ENCODE measurements at regions of chr9 and their contacts with region 1.

Region 1: GRCh38 chr9:19999491-20000057 is 210.7 kb upstream of the SLC24A2 start:
- DNase-seq: peak; percentile 85
- H3K4me3 Mint-ChIP-seq: no peak overlapping the region
- H3K27ac Mint-ChIP-seq: peak overlapping the region; percentile 85
- H3K4me1 Mint-ChIP-seq: peaks cover 43% of the 10 kb centered on the region
- H3K27me3 Mint-ChIP-seq: no peaks in the 10 kb centered on the region

Region 2: DNA sequence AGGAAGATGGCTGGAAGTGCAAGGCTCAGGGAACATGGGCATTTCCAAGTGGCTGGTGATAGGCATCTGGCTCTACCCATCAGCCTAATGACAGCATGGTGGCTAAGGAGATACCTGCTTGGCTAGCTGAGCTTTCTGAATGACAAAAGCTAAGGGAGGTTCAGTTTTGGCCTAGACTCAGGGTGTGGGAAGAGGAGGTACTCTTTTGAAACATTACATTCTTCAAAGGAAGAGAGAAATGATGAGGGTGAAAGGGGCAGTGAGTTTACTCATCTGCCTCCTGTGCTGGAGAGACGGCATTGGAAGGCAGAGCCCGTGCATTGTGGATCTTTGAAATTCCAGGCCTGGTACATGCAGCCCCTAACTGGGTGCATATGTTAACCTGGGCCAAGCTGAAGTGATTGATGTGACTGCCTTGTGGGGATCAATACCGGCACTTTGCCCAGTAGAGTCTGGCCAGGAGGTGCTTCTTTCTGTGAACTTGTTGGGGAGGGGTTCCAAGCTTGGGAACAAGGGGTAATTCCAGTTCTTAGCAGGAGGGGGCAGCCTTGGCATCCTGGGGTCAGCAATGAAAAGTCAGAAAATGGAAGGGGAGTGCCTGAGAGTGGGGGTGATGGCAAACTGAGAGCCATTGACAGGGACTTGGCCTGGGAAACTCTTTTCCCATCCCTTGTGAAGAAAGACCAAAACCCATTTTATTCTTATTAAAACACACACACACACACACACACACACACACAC is 482.2 kb before region 1 on chr9:
- CTCF ChIA-PET with region 1: no interaction called
- intact Hi-C with region 1: loop called (anchors 1 kb)
- DNase-seq: peak; percentile 21
- H3K4me3 Mint-ChIP-seq: no peak overlapping the region
- H3K27ac Mint-ChIP-seq: peak overlapping the region; percentile 15
- H3K4me1 Mint-ChIP-seq: peaks cover 31% of the 10 kb centered on the region
- H3K27me3 Mint-ChIP-seq: peaks cover 11% of the 10 kb centered on the region

Region 3: DNA sequence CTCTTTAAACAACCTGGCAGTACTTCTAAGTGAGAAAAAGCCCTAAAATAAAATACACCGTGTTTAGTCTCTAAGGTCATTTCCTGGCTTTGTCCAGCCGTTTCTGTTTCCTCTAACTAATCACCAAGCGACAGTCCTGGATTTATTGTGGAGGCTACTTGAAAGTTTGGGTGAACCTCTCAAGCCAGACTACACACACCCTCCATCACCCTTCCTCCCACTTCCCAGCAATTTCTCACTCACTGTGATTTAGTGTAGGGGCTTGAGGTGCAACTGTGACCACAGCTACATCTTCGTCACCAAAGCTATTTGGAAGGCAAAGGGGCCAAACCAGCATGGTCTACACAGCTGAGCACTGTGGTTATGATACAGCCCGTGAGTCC is 29.3 kb after region 1 on chr9:
- CTCF ChIA-PET with region 1: no interaction called
- intact Hi-C with region 1: no loop called
- DNase-seq: no peak
- H3K4me3 Mint-ChIP-seq: no peak overlapping the region
- H3K27ac Mint-ChIP-seq: no peak overlapping the region
- H3K4me1 Mint-ChIP-seq: no peaks in the 10 kb centered on the region
- H3K27me3 Mint-ChIP-seq: no peaks in the 10 kb centered on the region

Region 4: GRCh38 chr9:20209391-20210340 is 210.1 kb after region 1 on chr9:
- CTCF ChIA-PET with region 1: interaction called, 3 read pairs
- intact Hi-C with region 1: loop called (anchors 1 kb)
- DNase-seq: peak; percentile 56
- H3K4me3 Mint-ChIP-seq: no peak overlapping the region
- H3K27ac Mint-ChIP-seq: peak overlapping the region; percentile 70
- H3K4me1 Mint-ChIP-seq: peaks cover 31% of the 10 kb centered on the region
- H3K27me3 Mint-ChIP-seq: no peaks in the 10 kb centered on the region

Region 5: DNA sequence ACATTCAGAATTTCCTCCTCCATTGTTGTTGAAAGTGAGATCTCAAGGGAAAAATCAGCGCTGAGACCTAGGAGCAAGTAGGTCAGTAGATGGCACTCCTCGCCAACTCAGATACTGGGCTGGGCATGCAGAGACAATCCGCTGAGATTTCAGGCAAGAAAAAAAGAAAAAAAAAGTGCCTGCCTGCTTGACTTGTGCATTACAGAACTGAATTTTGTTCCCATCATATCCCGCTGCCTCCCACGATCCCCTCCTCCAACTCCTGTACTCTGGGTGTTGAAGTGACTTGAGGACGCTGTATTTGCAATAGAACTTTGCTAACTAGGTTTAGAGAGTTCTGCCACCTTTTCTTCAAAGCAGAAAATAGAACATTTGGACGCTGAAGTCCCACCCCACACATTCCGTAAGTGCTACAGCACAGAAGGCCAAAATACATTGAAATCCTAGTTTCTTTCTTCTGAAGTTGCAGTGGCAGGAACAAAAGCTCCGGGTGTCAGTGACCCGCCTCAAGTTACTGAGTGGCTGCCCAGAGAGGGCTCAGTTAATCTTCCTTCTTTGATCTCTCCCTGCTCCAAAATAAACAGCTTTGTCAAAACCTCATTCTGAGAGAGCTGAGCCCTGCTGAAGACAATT is 356.9 kb after region 1 on chr9:
- CTCF ChIA-PET with region 1: interaction called, 4 read pairs
- intact Hi-C with region 1: loop called (anchors 1 kb)
- DNase-seq: peak; percentile 85
- H3K4me3 Mint-ChIP-seq: no peak overlapping the region
- H3K27ac Mint-ChIP-seq: peak overlapping the region; percentile 46
- H3K4me1 Mint-ChIP-seq: peaks cover 72% of the 10 kb centered on the region
- H3K27me3 Mint-ChIP-seq: no peaks in the 10 kb centered on the region

Region 6: DNA sequence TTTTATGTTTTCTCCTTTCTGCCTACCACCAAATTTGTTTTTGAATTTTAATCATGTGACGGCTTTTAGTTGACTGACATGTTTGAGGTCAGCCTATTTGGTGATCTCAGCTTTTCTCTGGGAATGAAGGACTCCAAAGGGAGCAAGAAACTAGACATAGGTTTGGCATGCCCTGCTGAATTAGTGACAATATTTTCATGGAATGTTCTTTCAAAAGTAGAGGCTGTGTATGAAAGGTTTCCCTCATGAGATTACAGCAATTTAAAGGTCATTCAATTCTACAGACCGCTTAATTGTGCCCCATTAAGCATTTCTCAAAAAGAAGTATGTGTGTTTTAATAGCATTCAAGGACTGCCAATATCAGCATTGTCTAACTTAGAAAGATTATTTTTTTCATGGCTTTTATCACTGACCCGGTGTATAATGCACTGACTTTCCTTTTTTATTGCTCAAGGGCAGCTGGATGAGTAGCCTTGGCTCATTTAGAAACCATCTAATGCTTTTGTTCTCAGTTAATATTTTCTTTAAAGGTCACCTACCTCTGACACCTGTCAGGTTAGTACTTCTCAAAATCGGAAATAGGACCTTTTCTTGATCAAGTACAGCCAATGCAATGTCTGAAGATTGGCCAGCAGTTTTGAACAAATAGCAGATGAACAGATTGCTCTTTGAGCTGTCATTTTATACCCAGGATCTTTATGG is 630.8 kb after region 1 on chr9:
- CTCF ChIA-PET with region 1: no interaction called
- intact Hi-C with region 1: no loop called
- DNase-seq: no peak
- H3K4me3 Mint-ChIP-seq: no peak overlapping the region
- H3K27ac Mint-ChIP-seq: no peak overlapping the region
- H3K4me1 Mint-ChIP-seq: no peaks in the 10 kb centered on the region
- H3K27me3 Mint-ChIP-seq: no peaks in the 10 kb centered on the region

Region 7: DNA sequence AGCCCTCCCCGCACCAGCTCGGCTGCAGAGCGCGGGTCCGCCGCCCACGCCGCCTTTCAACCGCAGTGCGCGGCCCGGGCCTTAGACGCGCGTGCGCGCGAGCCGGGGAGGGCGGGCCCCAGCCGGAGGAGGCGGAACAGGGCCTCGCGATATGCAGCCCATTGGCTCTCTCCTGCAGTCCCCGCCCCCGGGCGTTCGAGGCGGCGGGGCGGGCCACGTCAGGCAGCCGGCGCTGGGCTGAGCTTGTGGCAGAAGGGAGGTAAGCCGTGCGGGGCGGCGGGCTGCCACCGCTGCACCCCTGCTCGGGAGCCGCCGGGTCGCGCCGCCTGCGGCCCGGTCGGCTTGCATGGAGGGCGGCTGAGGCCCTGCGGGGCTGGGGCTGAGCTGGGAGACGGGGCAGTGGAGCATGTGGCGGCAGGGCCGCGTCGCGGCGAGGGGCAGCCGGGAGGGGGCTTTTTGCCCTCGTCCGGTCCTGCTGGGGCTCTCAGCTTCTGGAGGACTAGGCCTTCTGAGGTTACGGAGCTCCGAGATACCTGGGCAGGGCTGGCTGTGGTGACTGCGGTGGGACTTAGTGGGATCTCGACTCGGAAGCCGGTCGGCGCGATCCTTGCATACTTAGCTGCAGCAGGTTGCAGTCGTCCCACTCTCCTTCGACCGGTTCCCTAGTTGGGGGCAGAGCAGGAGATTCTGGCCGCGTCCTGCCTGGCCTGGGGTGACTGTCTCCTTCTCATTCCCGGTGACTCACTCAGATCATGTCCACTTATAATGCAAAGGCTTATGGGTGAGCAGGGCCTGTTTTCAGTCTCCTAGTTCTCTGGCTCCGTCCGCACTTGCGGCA is 684.7 kb after region 1 on chr9 and contains the start of gene FOCAD:
- CTCF ChIA-PET with region 1: no interaction called
- intact Hi-C with region 1: loop called (anchors 1 kb)
- DNase-seq: peak; percentile 95
- H3K4me3 Mint-ChIP-seq: peak within 1 kb of the TSS; percentile 88
- H3K27ac Mint-ChIP-seq: peak within 1 kb of the TSS; percentile 76
- H3K4me1 Mint-ChIP-seq: peaks cover 17% of the 10 kb centered on the region
- H3K27me3 Mint-ChIP-seq: no peaks in the 10 kb centered on the region
- total RNA-seq, gene FOCAD: 31.7 to 32.2 TPM

Region 8: DNA sequence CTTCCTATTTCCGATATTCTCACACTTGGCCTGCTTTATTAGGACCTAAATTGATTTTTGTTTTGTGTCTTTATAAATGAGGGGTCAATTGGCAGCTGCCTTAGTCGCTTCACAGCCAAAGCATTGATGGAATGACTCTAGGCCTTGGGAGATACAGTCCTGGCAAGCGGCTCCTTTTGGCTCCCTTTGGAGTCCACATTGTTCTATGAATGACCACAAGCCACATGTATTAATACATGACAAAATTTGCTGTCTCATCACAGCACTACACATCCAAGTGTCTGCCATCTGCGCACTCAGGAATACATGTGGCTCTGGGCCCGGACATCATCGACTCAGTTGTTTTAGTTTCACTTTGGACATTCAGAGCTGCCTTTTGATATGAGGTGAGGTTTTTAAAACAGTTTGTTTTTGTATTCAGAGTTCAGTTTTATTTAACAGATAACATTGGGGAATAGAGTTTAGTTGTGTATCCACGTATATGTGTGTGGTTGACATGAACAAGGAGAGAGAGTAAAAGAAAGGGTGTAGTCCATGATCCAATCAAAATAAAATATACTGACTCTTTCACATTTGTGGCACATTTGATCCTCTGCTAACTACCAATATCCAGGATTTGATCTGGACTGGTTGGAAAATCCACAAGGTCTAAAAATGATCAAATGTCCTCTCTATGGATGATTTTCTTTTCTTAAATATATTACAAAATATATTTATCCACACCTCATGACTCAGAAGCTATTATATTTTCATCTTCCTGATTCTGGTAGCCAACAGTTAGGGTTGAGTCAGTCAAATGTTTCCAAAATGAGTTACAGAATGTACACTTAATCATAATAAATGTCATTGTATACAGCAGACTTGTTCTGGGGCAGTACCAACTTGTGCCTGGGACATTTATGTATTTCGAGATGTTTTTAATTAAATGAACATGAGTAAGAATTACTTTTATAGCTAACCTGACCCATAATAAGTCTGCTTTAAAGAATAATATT is 1688.8 kb after region 1 on chr9:
- CTCF ChIA-PET with region 1: no interaction called
- intact Hi-C with region 1: loop called (anchors 1 kb)
- DNase-seq: no peak
- H3K4me3 Mint-ChIP-seq: no peak overlapping the region
- H3K27ac Mint-ChIP-seq: peak overlapping the region; percentile 17
- H3K4me1 Mint-ChIP-seq: peaks cover 64% of the 10 kb centered on the region
- H3K27me3 Mint-ChIP-seq: no peaks in the 10 kb centered on the region

Measured in activated naive CD4-positive, alpha-beta T cell treated with anti-CD3 and anti-CD28 coated beads for 36 hours (primary cell).